ENCODE measurements at regions of chr2 and their contacts with region 1.

Region 1: GRCh38 chr2:95022309-95023221 is 2.9 kb upstream of the MAL start:
- H3K4me3 ChIP-seq: no peak overlapping the region
- H3K27ac ChIP-seq: no peak overlapping the region
- H3K4me1 ChIP-seq: no peaks in the 10 kb centered on the region
- CTCF ChIP-seq: peak; percentile 71

Region 2: GRCh38 chr2:95043300-95044093 is 20.9 kb after region 1 on chr2:
- CTCF ChIA-PET with region 1: interaction called, 13 read pairs
- POLR2A ChIA-PET with region 1: no interaction called
- H3K4me3 ChIP-seq: no peak overlapping the region
- H3K27ac ChIP-seq: no peak overlapping the region
- H3K4me1 ChIP-seq: no peaks in the 10 kb centered on the region
- CTCF ChIP-seq: no peak

Region 3: DNA sequence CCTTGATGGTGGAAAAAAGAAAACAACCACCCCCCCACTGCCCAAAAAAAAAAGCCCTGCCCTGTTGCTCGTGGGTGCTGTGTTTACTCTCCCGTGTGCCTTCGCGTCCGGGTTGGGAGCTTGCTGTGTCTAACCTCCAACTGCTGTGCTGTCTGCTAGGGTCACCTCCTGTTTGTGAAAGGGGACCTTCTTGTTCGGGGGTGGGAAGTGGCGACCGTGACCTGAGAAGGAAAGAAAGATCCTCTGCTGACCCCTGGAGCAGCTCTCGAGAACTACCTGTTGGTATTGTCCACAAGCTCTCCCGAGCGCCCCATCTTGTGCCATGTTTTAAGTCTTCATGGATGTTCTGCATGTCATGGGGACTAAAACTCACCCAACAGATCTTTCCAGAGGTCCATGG is 31.0 kb after region 1 on chr2:
- CTCF ChIA-PET with region 1: interaction called, 23 read pairs
- POLR2A ChIA-PET with region 1: no interaction called
- H3K4me3 ChIP-seq: no peak overlapping the region
- H3K27ac ChIP-seq: no peak overlapping the region
- H3K4me1 ChIP-seq: no peaks in the 10 kb centered on the region
- CTCF ChIP-seq: no peak

Region 4: GRCh38 chr2:95115418-95115817 is 92.9 kb after region 1 on chr2:
- CTCF ChIA-PET with region 1: interaction called, 26 read pairs
- POLR2A ChIA-PET with region 1: no interaction called
- H3K4me3 ChIP-seq: no peak overlapping the region
- H3K27ac ChIP-seq: no peak overlapping the region
- H3K4me1 ChIP-seq: no peaks in the 10 kb centered on the region; the same call in 1 of the 2 replicates
- CTCF ChIP-seq: no peak

Measured in HEK293 (cell line).